ENCODE measurements at regions of chr17 and their contacts with region 1.

Region 1: DNA sequence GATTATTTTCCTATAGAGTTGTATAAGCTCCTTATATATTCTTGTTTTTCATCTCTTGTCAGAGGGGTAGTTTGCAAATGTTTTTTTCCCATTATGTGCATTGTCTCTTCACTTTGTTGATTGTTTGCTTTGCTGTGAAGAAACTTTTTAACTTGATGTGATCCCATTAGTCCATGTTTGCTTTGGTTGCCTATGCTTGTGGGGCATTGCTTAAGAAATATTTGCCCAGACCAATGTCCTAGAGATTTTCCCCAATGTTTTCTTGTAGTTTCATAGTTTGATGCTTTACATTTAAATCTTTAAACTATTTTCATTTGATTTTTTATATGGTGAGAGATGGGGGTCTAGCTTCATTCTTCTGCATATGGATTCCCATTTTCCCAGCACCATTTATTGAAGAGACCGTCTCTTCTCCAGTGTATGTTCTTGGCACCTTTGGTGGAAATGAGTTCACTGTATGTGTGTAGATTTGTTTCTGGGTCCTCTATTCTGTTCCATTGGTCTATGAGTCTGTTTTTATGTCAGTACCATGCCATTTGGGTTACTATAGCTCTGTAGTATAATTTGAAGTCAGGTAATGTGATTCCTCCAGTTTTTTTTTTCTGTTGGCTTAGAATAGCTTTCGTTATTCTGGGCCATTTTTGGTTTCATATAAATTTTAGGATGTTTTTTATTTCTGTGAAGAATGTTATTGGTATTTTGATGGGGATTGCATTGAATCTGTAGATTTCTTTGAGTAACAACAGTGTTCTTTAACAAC is 165.8 kb downstream of the ABCA8 start:
- DNase-seq: peak; percentile 72
- ATAC-seq: no peak
- H3K4me3 ChIP-seq: no peak overlapping the region
- H3K27ac ChIP-seq: peak overlapping the region; percentile 49
- H3K4me1 ChIP-seq: peaks cover 63% of the 10 kb centered on the region
- H3K27me3 ChIP-seq: no peaks in the 10 kb centered on the region
- CTCF ChIP-seq: no peak
- EP300 ChIP-seq: peak in 1 of 2 experiments; percentile 93; a peak in 2 of 4 replicates
- POLR2A ChIP-seq: no peak
- RAD21 ChIP-seq: no peak

Region 2: DNA sequence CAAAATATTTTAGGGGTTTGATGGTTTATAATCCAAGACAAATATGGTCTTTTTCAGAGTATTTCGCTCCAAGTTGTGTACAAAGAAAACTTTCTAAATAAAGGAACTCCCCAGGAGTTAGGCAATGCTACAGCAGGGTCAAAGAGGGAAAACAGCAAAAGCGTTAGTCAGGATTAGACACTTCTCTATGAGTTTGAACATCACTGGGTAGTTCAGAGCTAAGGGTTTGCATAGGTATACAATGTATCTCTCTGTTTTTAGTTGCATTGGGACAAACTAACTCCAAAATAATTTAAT is 223.0 kb before region 1 on chr17:
- CTCF ChIA-PET with region 1: no interaction called
- POLR2A ChIA-PET with region 1: no interaction called
- in situ Hi-C with region 1: no loop called
- intact Hi-C with region 1: no loop called
- DNase-seq: no peak
- ATAC-seq: no peak
- H3K4me3 ChIP-seq: no peak overlapping the region
- H3K27ac ChIP-seq: no peak overlapping the region
- H3K4me1 ChIP-seq: peaks cover 17% of the 10 kb centered on the region
- H3K27me3 ChIP-seq: no peaks in the 10 kb centered on the region
- CTCF ChIP-seq: no peak
- EP300 ChIP-seq: no peak
- POLR2A ChIP-seq: no peak
- RAD21 ChIP-seq: no peak

Region 3: GRCh38 chr17:68821860-68822696 is 32.7 kb after region 1 on chr17:
- CTCF ChIA-PET with region 1: no interaction called
- POLR2A ChIA-PET with region 1: interaction called, 37 read pairs
- in situ Hi-C with region 1: no loop called
- intact Hi-C with region 1: loop called (anchors 1 kb)
- DNase-seq: peak; percentile 99
- ATAC-seq: peak; percentile 85
- H3K4me3 ChIP-seq: peak overlapping the region in 2 of 3 experiments; percentile 53 to 57; a peak in 3 of 6 replicates
- H3K27ac ChIP-seq: peak overlapping the region; percentile 91
- H3K4me1 ChIP-seq: peaks cover 79% of the 10 kb centered on the region
- H3K27me3 ChIP-seq: no peaks in the 10 kb centered on the region
- CTCF ChIP-seq: no peak
- EP300 ChIP-seq: peak; percentile 81 to 97; a peak in 3 of 4 replicates
- POLR2A ChIP-seq: no peak
- RAD21 ChIP-seq: no peak